ENCODE measurements at regions of chr17 and their contacts with region 1.

Region 1: GRCh38 chr17:35022536-35023063 is 40.9 kb downstream of the RFFL start:
- DNase-seq: peak; percentile 65
- ATAC-seq: peak; percentile 100
- H3K4me3 Mint-ChIP-seq: peak overlapping the region; percentile 78
- H3K27ac Mint-ChIP-seq: peak overlapping the region; percentile 97
- H3K4me1 Mint-ChIP-seq: peaks cover 32% of the 10 kb centered on the region
- H3K27me3 Mint-ChIP-seq: no peaks in the 10 kb centered on the region

Region 2: GRCh38 chr17:34980681-34981537 is 41.7 kb before region 1 on chr17:
- POLR2A ChIA-PET with region 1: interaction called, 19 read pairs
- DNase-seq: peak; percentile 91
- ATAC-seq: peak; percentile 88
- H3K4me3 Mint-ChIP-seq: peak overlapping the region; percentile 86
- H3K27ac Mint-ChIP-seq: peak overlapping the region; percentile 88
- H3K4me1 Mint-ChIP-seq: peaks cover 31% of the 10 kb centered on the region
- H3K27me3 Mint-ChIP-seq: no peaks in the 10 kb centered on the region

Region 3: GRCh38 chr17:35046740-35047283 is 24.2 kb after region 1 on chr17:
- POLR2A ChIA-PET with region 1: interaction called, 16 read pairs
- DNase-seq: no peak
- ATAC-seq: peak; percentile 92
- H3K4me3 Mint-ChIP-seq: peak overlapping the region; percentile 86
- H3K27ac Mint-ChIP-seq: peak overlapping the region; percentile 91
- H3K4me1 Mint-ChIP-seq: peaks cover 36% of the 10 kb centered on the region
- H3K27me3 Mint-ChIP-seq: no peaks in the 10 kb centered on the region

Region 4: DNA sequence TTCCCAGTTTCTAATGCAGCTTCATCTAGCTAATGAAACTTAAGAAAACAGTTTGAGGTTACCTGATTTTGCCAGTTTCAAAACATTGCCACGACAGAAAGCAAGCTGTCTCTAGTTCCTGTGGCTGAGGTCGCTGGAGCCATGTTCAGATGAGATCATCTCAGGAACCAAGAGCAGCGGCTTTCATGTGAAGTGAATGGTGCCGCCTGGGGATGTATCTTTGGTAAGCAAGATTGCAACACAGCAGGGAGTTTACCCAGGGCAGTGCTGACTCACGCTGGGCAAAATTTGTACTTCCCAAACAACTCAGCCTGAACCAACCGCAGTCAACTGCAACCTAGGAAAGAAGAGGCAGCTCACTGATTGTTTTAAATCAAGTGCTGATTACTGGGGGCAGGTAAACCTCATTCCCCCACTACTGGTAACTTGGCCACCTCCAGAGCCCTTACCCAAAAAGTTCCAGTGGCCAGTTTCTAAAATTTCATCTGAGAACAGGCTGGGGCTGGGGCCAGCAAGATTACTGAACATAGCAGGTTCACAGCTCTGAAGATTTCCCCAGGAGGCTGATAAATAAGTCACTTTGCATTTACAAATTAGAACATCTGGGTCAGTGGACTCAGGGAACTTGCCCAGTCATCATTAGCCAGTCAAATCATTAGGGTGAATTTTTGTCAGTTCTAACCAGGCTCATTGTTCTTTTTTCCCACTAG is 41.1 kb after region 1 on chr17 and contains the start of gene RFFL:
- POLR2A ChIA-PET with region 1: interaction called, 24 read pairs
- DNase-seq: peak; percentile 63
- ATAC-seq: peak; percentile 99
- H3K4me3 Mint-ChIP-seq: peak within 1 kb of the TSS; percentile 69
- H3K27ac Mint-ChIP-seq: peak within 1 kb of the TSS; percentile 91
- H3K4me1 Mint-ChIP-seq: peaks cover 27% of the 10 kb centered on the region
- H3K27me3 Mint-ChIP-seq: no peaks in the 10 kb centered on the region
- total RNA-seq, gene RFFL: 37.4 to 42.3 TPM

Region 5: GRCh38 chr17:35088881-35089585 is 66.4 kb after region 1 on chr17:
- POLR2A ChIA-PET with region 1: interaction called, 14 read pairs
- DNase-seq: peak; percentile 98
- ATAC-seq: peak; percentile 85
- H3K4me3 Mint-ChIP-seq: peak overlapping the region; percentile 85
- H3K27ac Mint-ChIP-seq: peak overlapping the region; percentile 91
- H3K4me1 Mint-ChIP-seq: peaks cover 24% of the 10 kb centered on the region
- H3K27me3 Mint-ChIP-seq: no peaks in the 10 kb centered on the region

Region 6: GRCh38 chr17:35161281-35161761 is 138.7 kb after region 1 on chr17:
- POLR2A ChIA-PET with region 1: no interaction called
- DNase-seq: no peak
- ATAC-seq: peak; percentile 84
- H3K4me3 Mint-ChIP-seq: peak overlapping the region; percentile 62
- H3K27ac Mint-ChIP-seq: peak overlapping the region; percentile 85
- H3K4me1 Mint-ChIP-seq: peaks cover 36% of the 10 kb centered on the region
- H3K27me3 Mint-ChIP-seq: no peaks in the 10 kb centered on the region

Region 7: DNA sequence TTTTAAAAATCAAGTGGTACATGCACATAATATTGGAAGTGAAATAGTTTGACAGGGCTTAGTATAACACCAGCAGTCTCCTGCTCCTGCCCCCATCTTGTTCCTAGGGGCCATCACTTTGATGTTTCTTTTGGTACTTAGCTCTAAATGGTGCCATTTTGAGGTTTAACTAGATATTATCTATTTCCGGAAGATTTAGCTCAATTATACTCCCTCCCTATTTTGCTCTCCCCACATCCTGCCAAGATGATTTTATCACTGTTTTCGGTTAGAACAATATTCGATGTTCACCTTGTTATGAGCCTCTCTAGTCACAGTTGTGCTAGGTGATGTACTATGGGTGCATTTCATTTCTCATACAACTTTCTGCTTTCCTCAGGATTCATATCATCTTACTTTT is 191.6 kb after region 1 on chr17:
- POLR2A ChIA-PET with region 1: no interaction called
- DNase-seq: no peak
- ATAC-seq: peak; percentile 75
- H3K4me3 Mint-ChIP-seq: peak overlapping the region; percentile 71
- H3K27ac Mint-ChIP-seq: peak overlapping the region; percentile 92
- H3K4me1 Mint-ChIP-seq: peaks cover 76% of the 10 kb centered on the region
- H3K27me3 Mint-ChIP-seq: no peaks in the 10 kb centered on the region

Region 8: GRCh38 chr17:35747540-35748017 is 725.0 kb after region 1 on chr17:
- POLR2A ChIA-PET with region 1: no interaction called
- DNase-seq: peak; percentile 80
- ATAC-seq: peak; percentile 80
- H3K4me3 Mint-ChIP-seq: no peak overlapping the region
- H3K27ac Mint-ChIP-seq: no peak overlapping the region
- H3K4me1 Mint-ChIP-seq: peaks cover 9% of the 10 kb centered on the region
- H3K27me3 Mint-ChIP-seq: peaks cover 38% of the 10 kb centered on the region

Measured in activated naive CD8-positive, alpha-beta T cell treated with anti-CD3 and anti-CD28 coated beads, Interleukin-2, amount 10 ng/mL, durations not matched to agents 7 days and 5 days (primary cell).